ENCODE measurements at regions of chr7 and their contacts with region 1.

Region 1: GRCh38 chr7:66344166-66344565 is 139.0 kb downstream of the TPST1 start:
- DNase-seq: no peak
- H3K4me3 ChIP-seq: no peak overlapping the region
- H3K27ac ChIP-seq: no peak overlapping the region
- H3K4me1 ChIP-seq: no peaks in the 10 kb centered on the region
- H3K27me3 ChIP-seq: no peaks in the 10 kb centered on the region
- CTCF ChIP-seq: no peak

Region 2: DNA sequence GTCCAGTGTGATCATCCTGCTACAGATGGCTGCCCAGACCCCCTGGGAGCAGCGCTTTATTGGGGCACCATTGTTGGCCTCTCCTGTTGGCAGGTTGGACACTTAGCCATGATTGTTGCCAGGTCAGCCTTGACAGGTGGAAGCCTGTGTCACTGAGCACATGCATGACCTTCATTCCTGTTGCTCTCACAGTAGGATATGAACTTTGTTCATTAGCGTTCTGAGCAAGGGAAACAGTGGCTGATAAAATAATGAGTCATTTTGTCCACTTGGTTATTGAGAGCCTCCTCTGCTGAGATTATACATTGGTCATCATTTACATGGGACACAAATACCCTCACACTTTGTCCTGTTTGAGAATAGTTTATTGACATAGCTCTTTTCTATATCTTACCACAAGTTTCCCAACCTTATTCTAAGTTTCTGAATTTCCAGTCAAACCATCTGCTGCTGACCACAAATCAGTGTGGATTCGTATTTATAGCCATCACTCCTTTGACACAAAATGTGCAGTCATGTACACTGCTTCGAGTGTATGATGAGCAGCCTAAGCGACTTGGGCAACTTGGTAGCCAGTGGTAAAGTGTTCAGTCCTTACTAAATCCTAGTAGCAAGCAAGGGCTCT is 36.5 kb before region 1 on chr7:
- CTCF ChIA-PET with region 1: no interaction called
- POLR2A ChIA-PET with region 1: no interaction called
- intact Hi-C with region 1: no loop called
- DNase-seq: no peak
- H3K4me3 ChIP-seq: no peak overlapping the region
- H3K27ac ChIP-seq: no peak overlapping the region
- H3K4me1 ChIP-seq: no peaks in the 10 kb centered on the region
- H3K27me3 ChIP-seq: no peaks in the 10 kb centered on the region
- CTCF ChIP-seq: no peak

Region 3: DNA sequence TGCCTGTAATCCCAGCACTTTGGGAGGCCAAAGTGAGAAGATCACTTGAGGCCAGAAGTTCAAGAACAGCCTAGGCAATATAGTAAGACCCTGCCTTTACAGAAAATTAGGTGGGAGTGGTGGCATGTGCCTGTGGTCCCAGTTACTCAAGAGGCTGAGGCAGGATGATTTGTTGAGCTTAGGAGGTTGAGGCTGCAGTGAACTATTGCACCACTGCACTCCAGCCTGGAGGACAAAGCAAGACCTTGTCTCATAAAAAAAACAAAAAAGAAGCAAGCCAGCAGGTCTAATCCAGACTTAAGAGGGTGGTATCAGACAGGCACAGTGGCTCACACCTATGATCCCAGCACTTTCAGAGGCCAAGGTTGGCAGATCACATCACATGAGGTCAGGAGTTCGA is 260.0 kb after region 1 on chr7:
- CTCF ChIA-PET with region 1: no interaction called
- POLR2A ChIA-PET with region 1: interaction called, 19 read pairs
- intact Hi-C with region 1: no loop called
- DNase-seq: no peak
- H3K4me3 ChIP-seq: no peak overlapping the region
- H3K27ac ChIP-seq: no peak overlapping the region
- H3K4me1 ChIP-seq: no peaks in the 10 kb centered on the region
- H3K27me3 ChIP-seq: no peaks in the 10 kb centered on the region
- CTCF ChIP-seq: no peak

Measured in A673 (cell line).